ENCODE measurements at regions of chrX and their contacts with region 1.

Region 1: GRCh38 chrX:24838629-24839028 is 144.9 kb downstream of the POLA1 start:
- H3K4me3 Mint-ChIP-seq: no peak overlapping the region
- H3K27ac Mint-ChIP-seq: no peak overlapping the region
- H3K4me1 Mint-ChIP-seq: no peaks in the 10 kb centered on the region
- H3K27me3 Mint-ChIP-seq: no peaks in the 10 kb centered on the region

Region 2: DNA sequence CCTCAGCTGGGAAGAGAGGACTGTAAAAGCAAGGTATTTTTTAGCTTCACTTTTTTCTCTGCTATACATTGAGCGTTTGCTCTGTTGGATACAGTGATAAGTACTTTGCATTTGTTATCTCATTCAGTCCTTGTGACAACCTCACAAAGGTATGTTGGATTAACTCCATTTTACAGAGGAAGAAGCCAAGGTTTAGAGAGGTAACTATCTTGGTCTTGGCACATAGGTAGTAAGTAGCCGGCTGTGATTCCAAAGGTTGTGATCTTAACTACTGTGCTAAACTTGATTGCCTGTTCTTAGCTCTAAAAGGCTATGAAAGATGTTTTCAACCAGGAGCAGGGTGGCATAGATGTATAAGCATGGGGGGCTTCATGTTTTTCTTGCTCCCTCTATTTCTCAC is 10.5 kb before region 1 on chrX:
- intact Hi-C with region 1: no loop called
- H3K4me3 Mint-ChIP-seq: no peak overlapping the region
- H3K27ac Mint-ChIP-seq: no peak overlapping the region
- H3K4me1 Mint-ChIP-seq: no peaks in the 10 kb centered on the region
- H3K27me3 Mint-ChIP-seq: no peaks in the 10 kb centered on the region

Region 3: GRCh38 chrX:25020905-25021449 is 182.3 kb after region 1 on chrX:
- intact Hi-C with region 1: loop called (anchors 5 kb)
- H3K4me3 Mint-ChIP-seq: peak overlapping the region; percentile 63
- H3K27ac Mint-ChIP-seq: no peak overlapping the region
- H3K4me1 Mint-ChIP-seq: peaks cover 36% of the 10 kb centered on the region
- H3K27me3 Mint-ChIP-seq: peaks cover 82% of the 10 kb centered on the region

Region 4: DNA sequence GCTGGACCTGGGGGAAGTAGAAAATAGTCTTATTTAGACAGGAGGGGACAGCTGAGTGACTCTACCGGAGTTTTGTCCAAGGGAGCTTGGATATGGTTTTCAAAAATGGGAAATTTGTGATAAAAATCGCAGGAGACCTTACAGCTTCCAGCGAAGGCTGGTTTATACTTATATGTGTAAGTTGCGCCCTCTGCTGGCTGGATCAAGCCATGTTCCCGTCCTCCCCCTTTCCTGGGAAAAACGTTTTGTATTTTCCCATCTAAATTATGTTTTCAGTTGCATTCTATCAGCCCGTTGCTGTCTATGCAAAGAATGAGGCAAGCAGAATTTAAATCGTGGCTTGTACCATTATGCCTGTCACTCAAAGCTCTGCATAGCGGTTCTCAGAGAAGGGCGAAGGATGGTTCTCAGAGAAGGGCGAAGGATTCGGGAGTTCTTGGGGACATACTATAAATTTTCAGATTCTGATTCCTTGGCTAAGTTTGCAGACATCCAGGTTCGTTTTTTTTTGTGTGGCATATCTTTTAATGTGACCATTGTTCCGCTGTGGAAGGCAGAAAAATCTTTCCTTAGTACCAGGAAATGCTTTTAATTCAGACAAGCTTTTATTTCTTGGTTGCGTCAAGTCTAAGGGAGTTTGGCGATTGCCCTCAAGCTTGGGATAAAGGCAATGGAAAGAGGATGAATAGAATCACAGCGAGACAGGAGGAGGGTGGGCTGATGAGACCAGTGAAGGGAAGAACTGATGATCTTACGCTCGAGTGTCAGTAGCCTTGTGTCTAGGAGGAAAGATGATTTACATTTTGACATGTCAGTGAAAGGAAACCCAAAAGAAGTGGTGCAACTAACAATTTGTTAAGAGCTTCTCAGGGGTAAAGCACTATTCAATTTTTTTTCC is 305.7 kb after region 1 on chrX:
- intact Hi-C with region 1: loop called (anchors 1 kb)
- H3K4me3 Mint-ChIP-seq: no peak overlapping the region
- H3K27ac Mint-ChIP-seq: no peak overlapping the region
- H3K4me1 Mint-ChIP-seq: no peaks in the 10 kb centered on the region
- H3K27me3 Mint-ChIP-seq: peaks cover 11% of the 10 kb centered on the region